HepG2 (cell line): ENCODE measurements at regions of chr21 and their contacts with region 1.

Region 1: DNA sequence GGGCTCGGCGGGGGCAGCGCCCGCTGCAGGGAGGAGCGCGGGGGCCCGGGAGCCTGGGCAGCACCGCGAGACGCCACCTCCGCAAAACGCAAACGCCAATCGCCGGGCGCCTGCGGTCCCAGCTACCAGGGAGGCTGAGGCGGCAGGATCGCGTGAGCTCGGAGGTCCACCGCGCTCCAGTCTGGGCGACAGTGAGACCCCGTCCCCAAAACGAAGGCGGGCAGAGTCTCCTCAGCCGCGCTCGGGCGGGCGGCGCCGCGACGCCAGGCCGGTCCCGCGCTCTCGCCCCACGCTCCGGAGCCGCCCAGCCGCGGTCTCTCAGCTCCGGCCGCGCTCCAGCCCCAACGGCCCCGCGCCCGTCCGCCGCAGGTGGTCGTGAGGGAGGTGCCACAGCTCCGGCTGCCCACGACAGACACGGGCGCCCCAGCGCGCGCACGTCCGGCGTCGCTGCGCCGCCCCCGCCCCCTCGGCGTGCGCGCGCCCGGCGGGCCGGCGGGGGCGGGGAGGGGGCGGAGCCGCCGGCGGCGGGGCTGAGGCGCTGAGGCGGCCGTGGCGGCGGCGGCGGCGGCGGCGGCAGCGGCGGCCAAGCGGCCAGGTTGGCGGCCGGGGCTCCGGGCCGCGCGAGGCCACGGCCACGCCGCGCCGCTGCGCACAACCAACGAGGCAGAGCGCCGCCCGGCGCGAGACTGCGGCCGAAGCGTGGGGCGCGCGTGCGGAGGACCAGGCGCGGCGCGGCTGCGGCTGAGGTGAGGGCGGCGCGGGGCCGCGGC is at the start of gene ADARB1:
- DNase-seq: peak; percentile 32
- ATAC-seq: peak; percentile 67
- H3K4me3 ChIP-seq: peak within 1 kb of the TSS; percentile 76 to 95 (median 94)
- H3K27ac ChIP-seq: peak within 1 kb of the TSS; percentile 64
- H3K4me1 ChIP-seq: peaks cover 25% of the 10 kb centered on the region
- H3K27me3 ChIP-seq: peaks cover 0 to 7% of the 10 kb centered on the region in 2 experiments; a peak in 1 of 5 replicates
- CTCF ChIP-seq: no peak
- EP300 ChIP-seq: no peak
- POLR2A ChIP-seq: peak in 1 of 2 experiments; percentile 82; a peak in 2 of 4 replicates
- RAD21 ChIP-seq: peak; percentile 67
- total RNA-seq, gene ADARB1: 9.2 and 10.0 TPM in 2 replicates

Region 2: GRCh38 chr21:45000977-45001728 is 73.1 kb before region 1 on chr21:
- CTCF ChIA-PET with region 1: no interaction called
- POLR2A ChIA-PET with region 1: interaction called, 5 read pairs
- in situ Hi-C with region 1: loop called (anchors 5 kb)
- intact Hi-C with region 1: no loop called
- DNase-seq: no peak
- ATAC-seq: no peak
- H3K4me3 ChIP-seq: no peak overlapping the region
- H3K27ac ChIP-seq: no peak overlapping the region
- H3K4me1 ChIP-seq: peaks cover 51% of the 10 kb centered on the region
- H3K27me3 ChIP-seq: peaks cover 7 to 42% of the 10 kb centered on the region in 2 experiments
- CTCF ChIP-seq: no peak
- EP300 ChIP-seq: no peak
- POLR2A ChIP-seq: no peak
- RAD21 ChIP-seq: no peak